ENCODE measurements at regions of chr9 and their contacts with region 1.

Region 1: DNA sequence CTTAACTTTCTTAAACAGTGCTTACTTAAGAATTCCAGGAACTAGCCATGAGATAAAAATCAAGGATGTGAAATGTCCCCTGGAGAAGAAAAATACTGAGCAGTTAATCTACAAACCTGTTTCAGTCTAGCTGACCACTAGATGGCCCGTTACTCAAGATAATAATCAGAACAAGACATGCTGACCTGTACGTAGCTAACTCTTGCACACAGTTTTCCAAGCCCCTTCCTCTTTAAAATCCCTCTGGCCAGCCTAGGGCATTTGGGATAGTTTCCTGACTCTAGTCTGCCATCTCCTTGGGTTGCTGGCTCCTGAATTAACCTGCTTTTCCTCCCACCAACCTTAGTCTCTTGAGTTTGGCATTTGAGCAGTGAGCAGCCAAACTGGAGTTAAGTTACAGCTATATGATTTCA is 59.2 kb upstream of the TRAF1 start:
- DNase-seq: no peak
- H3K4me3 ChIP-seq: no peak overlapping the region
- H3K27ac ChIP-seq: no peak overlapping the region
- H3K27me3 ChIP-seq: no peaks in the 10 kb centered on the region
- CTCF ChIP-seq: peak; percentile 29 to 79 (median 61)

Region 2: GRCh38 chr9:120001536-120001935 is 984.3 kb before region 1 on chr9:
- intact Hi-C with region 1: no loop called
- DNase-seq: no peak
- H3K4me3 ChIP-seq: no peak overlapping the region
- H3K27ac ChIP-seq: no peak overlapping the region
- H3K27me3 ChIP-seq: peaks cover 0 to 6% (median 0%) of the 10 kb centered on the region in 45 donors
- CTCF ChIP-seq: no peak

Region 3: GRCh38 chr9:121059998-121060636 is 74.3 kb after region 1 on chr9:
- intact Hi-C with region 1: loop called (anchors 5 kb)
- DNase-seq: peak in 1 of 10 donors; percentile 39
- H3K4me3 ChIP-seq: peak overlapping the region in 19 of 59 donors; percentile 9 to 43 (median 26)
- H3K27ac ChIP-seq: no peak overlapping the region
- H3K27me3 ChIP-seq: no peaks in the 10 kb centered on the region
- CTCF ChIP-seq: peak; percentile 60 to 90 (median 77)

Region 4: GRCh38 chr9:121399883-121400607 is 414.2 kb after region 1 on chr9:
- intact Hi-C with region 1: loop called in 1 of 2 experiments (anchors 10 kb)
- DNase-seq: no peak
- H3K4me3 ChIP-seq: no peak overlapping the region
- H3K27ac ChIP-seq: no peak overlapping the region
- H3K27me3 ChIP-seq: no peaks in the 10 kb centered on the region
- CTCF ChIP-seq: peak; percentile 72 to 94 (median 82)

Measured in dorsolateral prefrontal cortex (tissue), 120 donors.